Breast epithelium (tissue), 4 donors: ENCODE measurements at regions of chr3 and their contacts with region 1.

Region 1: DNA sequence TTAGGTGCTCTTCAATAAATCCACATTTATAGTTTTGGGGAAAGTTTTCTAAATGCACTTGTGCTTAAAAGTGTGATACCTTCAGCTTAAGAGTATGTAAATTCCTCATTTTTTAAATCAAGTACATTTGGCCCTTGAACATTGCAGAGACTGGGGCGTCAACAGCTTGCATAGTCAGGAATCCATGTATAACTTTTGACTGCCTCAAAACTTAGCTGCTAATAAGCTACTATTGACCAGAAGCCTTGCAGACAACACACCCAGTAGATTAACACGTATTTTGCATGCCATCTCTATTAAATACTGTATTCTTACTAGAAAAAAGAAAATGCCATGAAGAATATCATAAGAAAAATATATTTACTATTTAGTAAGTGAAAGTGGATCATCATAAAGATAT is 1211.8 kb upstream of the ALCAM start:
- DNase-seq: no peak
- H3K4me3 ChIP-seq: no peak overlapping the region
- H3K27ac ChIP-seq: no peak overlapping the region
- H3K4me1 ChIP-seq: no peaks in the 10 kb centered on the region
- H3K27me3 ChIP-seq: no peaks in the 10 kb centered on the region
- CTCF ChIP-seq: no peak
- POLR2A ChIP-seq: no peak

Region 2: GRCh38 chr3:103048068-103048722 is 1106.7 kb before region 1 on chr3:
- intact Hi-C with region 1: no loop called
- DNase-seq: no peak
- H3K4me3 ChIP-seq: no peak overlapping the region
- H3K27ac ChIP-seq: no peak overlapping the region
- H3K4me1 ChIP-seq: no peaks in the 10 kb centered on the region
- H3K27me3 ChIP-seq: no peaks in the 10 kb centered on the region
- CTCF ChIP-seq: no peak
- POLR2A ChIP-seq: no peak

Region 3: GRCh38 chr3:105083945-105084344 is 929.0 kb after region 1 on chr3:
- intact Hi-C with region 1: loop called (anchors 5 kb)
- DNase-seq: no peak
- H3K4me3 ChIP-seq: no peak overlapping the region
- H3K27ac ChIP-seq: no peak overlapping the region
- H3K4me1 ChIP-seq: no peaks in the 10 kb centered on the region
- H3K27me3 ChIP-seq: no peaks in the 10 kb centered on the region
- CTCF ChIP-seq: no peak
- POLR2A ChIP-seq: no peak

Region 4: GRCh38 chr3:105555206-105555605 is 1400.3 kb after region 1 on chr3:
- intact Hi-C with region 1: no loop called
- DNase-seq: no peak
- H3K4me3 ChIP-seq: no peak overlapping the region
- H3K27ac ChIP-seq: no peak overlapping the region
- H3K4me1 ChIP-seq: no peaks in the 10 kb centered on the region
- H3K27me3 ChIP-seq: no peaks in the 10 kb centered on the region
- CTCF ChIP-seq: no peak
- POLR2A ChIP-seq: no peak